GM12878 (cell line): ENCODE measurements at regions of chr2 and their contacts with region 1.

Region 1: DNA sequence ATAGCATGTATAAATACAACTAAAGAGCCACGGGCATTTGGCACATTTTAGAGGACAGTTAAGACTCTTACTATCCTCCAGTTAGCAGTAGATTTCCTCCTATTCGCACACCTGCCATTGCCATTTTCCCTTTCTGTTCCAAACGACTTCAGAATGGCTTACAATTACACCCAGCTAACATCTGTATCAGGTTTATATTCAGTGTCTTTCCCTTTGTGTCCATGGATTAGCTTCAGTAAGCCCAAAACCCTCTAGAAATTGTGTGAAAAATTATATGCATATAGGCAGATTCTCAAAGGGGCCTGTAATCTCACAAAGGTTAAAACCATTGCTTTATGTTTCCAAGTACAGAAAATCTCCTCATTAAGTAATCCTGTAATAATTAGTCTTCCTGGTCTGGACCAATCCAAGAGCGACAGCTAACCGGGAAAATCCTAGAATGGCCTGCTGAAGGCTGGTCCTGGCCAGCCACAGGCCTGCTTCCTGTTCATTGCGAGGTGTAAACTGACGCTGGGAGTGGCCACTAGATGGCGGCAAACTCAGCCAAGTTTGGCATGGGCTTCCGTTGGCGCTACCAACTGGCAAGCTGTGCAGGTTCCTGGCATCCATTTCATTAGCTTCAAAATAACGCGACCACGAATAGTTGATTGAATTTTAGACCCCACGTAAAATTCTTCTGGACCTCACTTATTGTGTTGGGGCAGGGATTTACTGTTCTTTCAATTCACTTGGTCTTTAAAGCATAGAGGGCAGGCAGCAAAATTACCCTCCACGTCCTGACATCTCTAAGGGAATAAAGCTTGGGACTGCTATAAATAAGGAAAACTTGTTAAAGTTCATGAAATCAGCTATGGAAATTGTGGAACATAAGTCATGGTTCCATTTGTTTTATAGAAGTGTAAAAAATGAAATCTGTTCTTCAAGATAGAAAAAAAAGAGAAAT is 17.1 kb downstream of the ARHGAP25 start:
- DNase-seq: no peak
- ATAC-seq: peak; percentile 99
- H3K4me3 ChIP-seq: no peak overlapping the region
- H3K27ac ChIP-seq: no peak overlapping the region
- H3K4me1 ChIP-seq: no peaks in the 10 kb centered on the region
- H3K27me3 ChIP-seq: peaks cover 0 to 1% of the 10 kb centered on the region in 2 experiments; a peak in 2 of 4 replicates
- CTCF ChIP-seq: peak; percentile 90 to 94 (median 92)
- EP300 ChIP-seq: no peak
- POLR2A ChIP-seq: no peak
- RAD21 ChIP-seq: peak; percentile 89

Region 2: DNA sequence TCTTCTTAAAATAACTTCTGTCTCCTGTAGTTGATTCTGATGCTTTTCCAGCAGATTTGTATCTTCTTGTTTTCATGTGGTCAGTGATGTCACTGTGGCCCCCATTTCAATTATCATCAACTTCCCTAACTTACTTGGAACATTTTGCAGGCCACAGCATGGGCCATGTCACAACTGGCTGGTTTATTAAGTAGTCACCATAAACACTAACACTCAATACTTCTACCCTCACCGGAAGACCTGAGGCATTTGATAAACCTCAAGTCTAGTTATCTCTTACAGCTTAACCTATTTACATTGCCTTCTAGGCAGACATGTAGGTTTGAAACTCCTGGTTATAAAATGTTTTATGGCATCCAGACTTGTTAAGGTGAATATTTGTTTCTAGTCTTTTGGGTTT is 145.7 kb before region 1 on chr2:
- CTCF ChIA-PET with region 1: no interaction called
- POLR2A ChIA-PET with region 1: no interaction called
- RAD21 ChIA-PET with region 1: no interaction called
- SMC1A ChIA-PET with region 1: no interaction called
- in situ Hi-C with region 1: no loop called
- intact Hi-C with region 1: no loop called
- DNase-seq: no peak
- ATAC-seq: no peak
- H3K4me3 ChIP-seq: no peak overlapping the region
- H3K27ac ChIP-seq: no peak overlapping the region
- H3K4me1 ChIP-seq: no peaks in the 10 kb centered on the region
- H3K27me3 ChIP-seq: no peaks in the 10 kb centered on the region
- CTCF ChIP-seq: no peak
- EP300 ChIP-seq: no peak
- POLR2A ChIP-seq: no peak
- RAD21 ChIP-seq: no peak

Region 3: GRCh38 chr2:68620772-68621171 is 130.9 kb before region 1 on chr2:
- CTCF ChIA-PET with region 1: no interaction called
- POLR2A ChIA-PET with region 1: no interaction called
- RAD21 ChIA-PET with region 1: no interaction called
- SMC1A ChIA-PET with region 1: no interaction called
- in situ Hi-C with region 1: no loop called
- intact Hi-C with region 1: no loop called
- DNase-seq: no peak
- ATAC-seq: no peak
- H3K4me3 ChIP-seq: no peak overlapping the region
- H3K27ac ChIP-seq: no peak overlapping the region
- H3K4me1 ChIP-seq: no peaks in the 10 kb centered on the region
- H3K27me3 ChIP-seq: no peaks in the 10 kb centered on the region; a peak in 1 of 4 replicates
- CTCF ChIP-seq: no peak
- EP300 ChIP-seq: no peak
- POLR2A ChIP-seq: no peak
- RAD21 ChIP-seq: no peak

Region 4: GRCh38 chr2:68658266-68658665 is 93.4 kb before region 1 on chr2:
- CTCF ChIA-PET with region 1: no interaction called
- POLR2A ChIA-PET with region 1: no interaction called
- RAD21 ChIA-PET with region 1: no interaction called
- SMC1A ChIA-PET with region 1: no interaction called
- in situ Hi-C with region 1: no loop called
- intact Hi-C with region 1: no loop called
- DNase-seq: no peak
- ATAC-seq: no peak
- H3K4me3 ChIP-seq: no peak overlapping the region
- H3K27ac ChIP-seq: no peak overlapping the region
- H3K4me1 ChIP-seq: peaks cover 8% of the 10 kb centered on the region
- H3K27me3 ChIP-seq: peaks cover 0 to 4% of the 10 kb centered on the region in 2 experiments; a peak in 2 of 4 replicates
- CTCF ChIP-seq: no peak
- EP300 ChIP-seq: no peak
- POLR2A ChIP-seq: no peak
- RAD21 ChIP-seq: no peak

Region 5: DNA sequence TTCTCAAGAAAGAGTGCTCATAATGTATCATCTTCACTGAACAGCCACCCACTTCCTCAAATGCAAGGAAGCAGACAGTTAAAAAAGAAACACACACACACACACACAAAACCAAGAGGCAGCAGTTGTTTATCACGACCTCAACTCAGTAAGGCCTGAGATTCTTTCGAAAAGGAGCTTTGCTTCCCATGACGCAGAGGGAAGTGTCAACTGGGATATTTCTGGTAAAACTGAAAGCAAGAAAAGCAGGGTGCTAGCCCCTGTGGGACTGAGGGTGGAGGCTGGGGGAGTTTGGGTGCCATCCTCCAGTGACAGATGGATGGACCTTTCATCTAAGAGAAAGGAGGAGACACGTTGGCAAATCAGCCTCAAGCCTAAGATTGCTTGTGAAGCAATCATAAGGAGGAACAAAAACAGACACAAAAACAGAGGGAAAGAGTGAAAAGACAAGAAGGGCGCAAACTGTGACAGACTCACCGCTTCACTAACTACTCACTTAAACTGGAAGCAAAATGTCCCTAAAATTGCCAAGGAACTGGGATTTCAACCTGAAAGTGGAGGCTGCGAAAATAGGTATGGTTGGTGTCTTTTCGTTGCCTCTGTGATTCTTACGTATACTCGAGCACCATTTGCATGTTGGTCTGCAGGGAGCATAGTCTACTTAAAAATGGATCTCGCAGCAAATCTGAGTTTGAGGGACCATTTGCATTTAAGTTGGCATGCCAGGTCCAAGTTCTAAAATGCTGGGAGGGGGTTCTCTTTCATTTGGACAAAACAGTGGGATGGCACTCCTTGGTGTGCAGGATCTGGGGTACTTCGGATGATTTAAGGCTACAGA is 16.8 kb before region 1 on chr2 and contains the start of gene ARHGAP25:
- CTCF ChIA-PET with region 1: interaction called, 27 read pairs
- POLR2A ChIA-PET with region 1: no interaction called
- RAD21 ChIA-PET with region 1: interaction called, 7 read pairs
- SMC1A ChIA-PET with region 1: interaction called, 9 read pairs
- in situ Hi-C with region 1: no loop called
- intact Hi-C with region 1: no loop called
- DNase-seq: peak; percentile 69
- ATAC-seq: peak; percentile 80
- H3K4me3 ChIP-seq: peak within 1 kb of the TSS; percentile 37
- H3K27ac ChIP-seq: peak within 1 kb of the TSS; percentile 47
- H3K4me1 ChIP-seq: peaks cover 43% of the 10 kb centered on the region
- H3K27me3 ChIP-seq: no peaks in the 10 kb centered on the region
- CTCF ChIP-seq: no peak
- EP300 ChIP-seq: no peak; a peak in 1 of 4 replicates
- POLR2A ChIP-seq: no peak; the same call in 1 of the 2 replicates
- RAD21 ChIP-seq: no peak
- polyA plus RNA-seq, gene ARHGAP25: 0.40 to 0.42 TPM

Region 6: DNA sequence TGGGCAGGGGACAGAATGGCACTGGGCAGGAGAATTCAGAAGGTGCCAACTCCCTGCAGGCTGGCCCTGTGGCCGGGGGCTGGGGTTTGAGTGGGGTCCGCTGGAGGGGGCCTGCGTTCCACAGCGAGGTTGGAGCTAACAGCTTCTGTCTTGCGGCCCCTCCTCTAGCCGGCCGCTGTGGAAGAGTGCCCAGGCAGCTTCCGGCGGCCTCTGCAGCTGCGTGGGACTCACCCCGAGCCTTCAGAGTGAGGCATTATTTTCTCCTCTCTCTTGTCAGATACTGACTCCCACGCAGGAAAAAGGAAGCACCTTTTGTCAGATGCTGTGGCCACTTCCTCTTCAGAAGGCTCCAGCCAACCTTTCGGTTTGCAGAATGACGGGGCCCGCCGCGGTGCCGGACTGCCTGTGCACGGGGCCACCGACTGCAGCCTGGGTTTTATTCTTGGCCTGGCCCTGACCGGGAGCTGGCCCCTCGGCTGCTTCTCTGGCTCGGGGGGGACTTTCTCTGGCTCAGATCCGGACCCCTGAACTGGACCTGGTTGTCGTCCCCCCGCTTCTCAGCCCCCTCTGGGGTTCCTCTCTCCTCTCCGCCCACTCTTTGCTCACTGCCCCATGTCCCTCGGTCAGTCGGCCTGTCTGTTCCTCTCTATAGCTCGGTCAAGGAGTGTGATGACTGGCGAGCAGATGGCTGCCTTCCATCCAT is 23.1 kb after region 1 on chr2:
- CTCF ChIA-PET with region 1: interaction called, 13 read pairs
- POLR2A ChIA-PET with region 1: no interaction called
- RAD21 ChIA-PET with region 1: interaction called, 3 read pairs
- SMC1A ChIA-PET with region 1: interaction called, 5 read pairs
- in situ Hi-C with region 1: no loop called
- intact Hi-C with region 1: no loop called
- DNase-seq: peak; percentile 54
- ATAC-seq: peak; percentile 94
- H3K4me3 ChIP-seq: peak overlapping the region; percentile 18; the same call in 1 of the 2 replicates
- H3K27ac ChIP-seq: no peak overlapping the region
- H3K4me1 ChIP-seq: peaks cover 39% of the 10 kb centered on the region
- H3K27me3 ChIP-seq: peaks cover 2 to 5% of the 10 kb centered on the region in 2 experiments; a peak in 3 of 4 replicates
- CTCF ChIP-seq: no peak
- EP300 ChIP-seq: no peak
- POLR2A ChIP-seq: no peak
- RAD21 ChIP-seq: no peak

Region 7: GRCh38 chr2:68909793-68910674 is 158.4 kb after region 1 on chr2:
- CTCF ChIA-PET with region 1: interaction called, 37 read pairs
- POLR2A ChIA-PET with region 1: no interaction called
- RAD21 ChIA-PET with region 1: interaction called, 6 read pairs
- SMC1A ChIA-PET with region 1: interaction called, 16 read pairs
- in situ Hi-C with region 1: loop called (anchors 5 kb)
- intact Hi-C with region 1: loop called (anchors 1 kb)
- DNase-seq: peak; percentile 40
- ATAC-seq: peak; percentile 89
- H3K4me3 ChIP-seq: no peak overlapping the region
- H3K27ac ChIP-seq: no peak overlapping the region
- H3K4me1 ChIP-seq: peaks cover 16% of the 10 kb centered on the region
- H3K27me3 ChIP-seq: no peaks in the 10 kb centered on the region; a peak in 1 of 4 replicates
- CTCF ChIP-seq: peak; percentile 84 to 94 (median 90)
- EP300 ChIP-seq: no peak
- POLR2A ChIP-seq: no peak
- RAD21 ChIP-seq: peak; percentile 97

Region 8: GRCh38 chr2:68943581-68944568 is 192.2 kb after region 1 on chr2:
- CTCF ChIA-PET with region 1: interaction called, 11 read pairs
- POLR2A ChIA-PET with region 1: no interaction called
- RAD21 ChIA-PET with region 1: no interaction called
- SMC1A ChIA-PET with region 1: no interaction called
- in situ Hi-C with region 1: no loop called
- intact Hi-C with region 1: no loop called
- DNase-seq: no peak
- ATAC-seq: peak; percentile 83
- H3K4me3 ChIP-seq: no peak overlapping the region
- H3K27ac ChIP-seq: no peak overlapping the region
- H3K4me1 ChIP-seq: no peaks in the 10 kb centered on the region
- H3K27me3 ChIP-seq: peaks cover 0 to 3% of the 10 kb centered on the region in 2 experiments; a peak in 2 of 4 replicates
- CTCF ChIP-seq: peak; percentile 67 to 84 (median 72)
- EP300 ChIP-seq: no peak
- POLR2A ChIP-seq: no peak
- RAD21 ChIP-seq: peak; percentile 63